Transverse colon (tissue), 4 donors: ENCODE measurements at regions of chr4 and their contacts with region 1.

Region 1: GRCh38 chr4:159837071-159837470 is 734.2 kb downstream of the RAPGEF2 start:
- DNase-seq: no peak
- H3K4me3 ChIP-seq: no peak overlapping the region
- H3K27ac ChIP-seq: no peak overlapping the region
- H3K4me1 ChIP-seq: no peaks in the 10 kb centered on the region
- H3K27me3 ChIP-seq: no peaks in the 10 kb centered on the region
- CTCF ChIP-seq: no peak
- EP300 ChIP-seq: no peak
- POLR2A ChIP-seq: no peak

Region 2: GRCh38 chr4:157942017-157942416 is 1895.1 kb before region 1 on chr4:
- in situ Hi-C with region 1: no loop called
- intact Hi-C with region 1: no loop called
- DNase-seq: no peak
- H3K4me3 ChIP-seq: no peak overlapping the region
- H3K27ac ChIP-seq: no peak overlapping the region
- H3K4me1 ChIP-seq: no peaks in the 10 kb centered on the region
- H3K27me3 ChIP-seq: no peaks in the 10 kb centered on the region
- CTCF ChIP-seq: no peak
- EP300 ChIP-seq: no peak
- POLR2A ChIP-seq: no peak

Region 3: DNA sequence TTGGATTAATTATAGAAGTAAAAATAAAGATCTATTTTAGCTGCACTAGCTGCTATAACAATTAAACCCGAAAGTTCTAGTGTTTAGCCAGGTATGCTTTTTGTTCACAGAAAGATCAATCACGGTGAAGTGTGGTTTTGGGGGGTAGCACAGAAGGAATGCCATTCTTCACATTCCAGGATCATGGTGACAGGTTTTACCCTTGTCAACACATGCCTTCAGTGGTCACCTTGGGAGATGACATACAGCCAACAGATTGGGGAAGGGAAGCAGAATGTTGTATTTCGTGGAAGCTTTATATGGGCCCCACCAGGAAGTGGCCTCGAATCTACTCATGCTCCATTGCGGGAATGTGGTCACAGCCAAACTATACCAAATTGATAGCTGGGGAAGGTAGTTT is 19.4 kb after region 1 on chr4:
- in situ Hi-C with region 1: no loop called
- intact Hi-C with region 1: loop called (anchors 2 kb)
- DNase-seq: no peak
- H3K4me3 ChIP-seq: no peak overlapping the region
- H3K27ac ChIP-seq: no peak overlapping the region
- H3K4me1 ChIP-seq: no peaks in the 10 kb centered on the region
- H3K27me3 ChIP-seq: no peaks in the 10 kb centered on the region
- CTCF ChIP-seq: no peak
- EP300 ChIP-seq: no peak
- POLR2A ChIP-seq: no peak

Region 4: DNA sequence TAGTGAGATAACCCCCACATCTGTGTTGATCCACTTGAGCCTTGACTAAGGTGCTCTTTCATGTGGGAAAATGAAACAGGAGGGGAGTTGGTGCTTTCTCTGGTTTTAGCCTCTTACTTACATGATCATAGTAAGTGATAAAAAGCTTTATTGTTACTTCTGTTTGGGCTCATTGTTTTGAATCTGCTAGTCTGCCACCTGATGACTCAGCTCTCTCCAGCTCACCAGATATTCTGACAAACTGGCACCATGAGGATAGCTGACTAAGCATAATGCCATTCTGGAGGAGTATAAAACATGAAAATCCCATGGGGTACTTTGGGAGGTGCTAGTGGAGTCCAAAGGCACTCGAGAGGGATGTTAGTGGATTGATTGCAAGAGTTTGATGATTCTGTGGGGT is 89.8 kb after region 1 on chr4:
- in situ Hi-C with region 1: no loop called
- intact Hi-C with region 1: no loop called
- DNase-seq: no peak
- H3K4me3 ChIP-seq: no peak overlapping the region
- H3K27ac ChIP-seq: no peak overlapping the region
- H3K4me1 ChIP-seq: no peaks in the 10 kb centered on the region
- H3K27me3 ChIP-seq: no peaks in the 10 kb centered on the region
- CTCF ChIP-seq: no peak
- EP300 ChIP-seq: no peak
- POLR2A ChIP-seq: no peak

Region 5: GRCh38 chr4:160091631-160092030 is 254.6 kb after region 1 on chr4:
- in situ Hi-C with region 1: no loop called
- intact Hi-C with region 1: no loop called
- DNase-seq: no peak
- H3K4me3 ChIP-seq: no peak overlapping the region
- H3K27ac ChIP-seq: no peak overlapping the region
- H3K4me1 ChIP-seq: no peaks in the 10 kb centered on the region
- H3K27me3 ChIP-seq: no peaks in the 10 kb centered on the region
- CTCF ChIP-seq: no peak
- EP300 ChIP-seq: no peak
- POLR2A ChIP-seq: no peak

Region 6: GRCh38 chr4:161287678-161288352 is 1450.7 kb after region 1 on chr4:
- in situ Hi-C with region 1: no loop called
- intact Hi-C with region 1: no loop called
- DNase-seq: no peak
- H3K4me3 ChIP-seq: no peak overlapping the region
- H3K27ac ChIP-seq: no peak overlapping the region
- H3K4me1 ChIP-seq: no peaks in the 10 kb centered on the region
- H3K27me3 ChIP-seq: no peaks in the 10 kb centered on the region
- CTCF ChIP-seq: no peak
- EP300 ChIP-seq: no peak
- POLR2A ChIP-seq: no peak